Activated B cell treated with CpG ODN at 0.5 μM for 24 hours (primary cell): ENCODE measurements at regions of chr5 and their contacts with region 1.

Region 1: DNA sequence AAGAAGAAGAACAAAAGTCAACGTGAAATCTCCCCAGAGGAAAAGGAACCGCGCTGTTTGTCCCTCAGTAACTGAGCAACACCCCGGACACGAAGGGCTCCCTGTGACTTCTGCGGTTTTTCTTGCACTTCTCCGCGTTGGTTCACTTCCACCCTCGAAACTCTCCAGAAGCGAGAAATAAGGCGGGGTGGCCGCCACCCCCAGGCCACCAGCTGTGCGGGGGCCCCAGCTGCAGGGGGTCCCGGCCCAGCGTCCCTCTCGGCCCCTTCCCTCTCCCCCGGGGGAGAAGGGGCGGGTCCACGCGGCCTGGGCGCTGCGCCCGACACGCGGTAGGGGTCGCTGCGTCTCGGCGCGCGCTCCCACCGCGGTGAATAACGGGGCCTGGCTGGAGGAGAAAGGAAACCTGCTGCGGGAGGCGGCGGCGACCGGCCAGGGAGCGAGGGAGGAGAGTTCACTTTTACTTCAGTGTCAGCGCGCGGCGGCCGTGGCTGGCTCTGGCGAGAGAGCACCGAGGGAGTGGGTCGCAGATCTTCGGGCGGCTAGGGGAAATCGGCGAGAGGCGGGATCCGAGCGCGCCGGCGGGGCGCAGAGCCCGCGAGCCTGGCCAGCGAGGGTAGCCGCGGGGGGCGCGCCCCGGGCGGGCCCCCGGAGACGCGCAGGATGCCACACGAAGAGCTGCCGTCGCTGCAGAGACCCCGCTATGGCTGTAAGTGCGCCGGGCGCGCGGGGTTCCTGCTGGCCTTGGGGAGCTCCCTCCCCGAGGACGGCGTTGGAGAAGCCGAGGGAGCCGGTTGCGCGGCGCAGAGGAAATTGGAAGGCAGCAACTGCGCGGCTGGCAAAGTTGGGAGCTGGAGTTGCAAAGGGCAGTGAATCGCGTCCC is at the start of gene IQGAP2:
- DNase-seq: peak; percentile 82
- ATAC-seq: peak; percentile 75
- H3K4me3 Mint-ChIP-seq: peak within 1 kb of the TSS; percentile 95
- H3K27ac Mint-ChIP-seq: peak within 1 kb of the TSS; percentile 97
- H3K4me1 Mint-ChIP-seq: peaks cover 51% of the 10 kb centered on the region
- H3K27me3 Mint-ChIP-seq: peaks cover 3% of the 10 kb centered on the region
- CTCF ChIP-seq: no peak
- total RNA-seq, gene IQGAP2: 6.7 and 8.8 TPM in 2 replicates

Region 2: GRCh38 chr5:74684900-74685851 is 1718.0 kb before region 1 on chr5 and contains the start of gene HEXB:
- CTCF ChIA-PET with region 1: no interaction called
- POLR2A ChIA-PET with region 1: no interaction called
- intact Hi-C with region 1: loop called (anchors 10 kb)
- DNase-seq: peak; percentile 77
- ATAC-seq: peak; percentile 86
- H3K4me3 Mint-ChIP-seq: peak within 1 kb of the TSS; percentile 81
- H3K27ac Mint-ChIP-seq: peak within 1 kb of the TSS; percentile 63
- H3K4me1 Mint-ChIP-seq: peaks cover 18% of the 10 kb centered on the region
- H3K27me3 Mint-ChIP-seq: no peaks in the 10 kb centered on the region
- CTCF ChIP-seq: no peak
- total RNA-seq, gene HEXB: 34.5 and 43.2 TPM in 2 replicates

Region 3: GRCh38 chr5:75511435-75512384 is 891.4 kb before region 1 on chr5 and contains the starts of genes CERT1 and POLK:
- CTCF ChIA-PET with region 1: no interaction called
- POLR2A ChIA-PET with region 1: no interaction called
- intact Hi-C with region 1: loop called (anchors 5 kb)
- DNase-seq: peak; percentile 85
- ATAC-seq: peak; percentile 90
- H3K4me3 Mint-ChIP-seq: peak within 1 kb of the TSS; percentile 95
- H3K27ac Mint-ChIP-seq: peak within 1 kb of the TSS; percentile 95
- H3K4me1 Mint-ChIP-seq: peaks cover 70% of the 10 kb centered on the region
- H3K27me3 Mint-ChIP-seq: no peaks in the 10 kb centered on the region
- CTCF ChIP-seq: no peak
- total RNA-seq, gene CERT1: 39.1 and 49.5 TPM in 2 replicates
- total RNA-seq, gene POLK: 29.0 and 34.0 TPM in 2 replicates

Region 4: GRCh38 chr5:76145945-76146344 is 257.2 kb before region 1 on chr5:
- CTCF ChIA-PET with region 1: no interaction called
- POLR2A ChIA-PET with region 1: no interaction called
- intact Hi-C with region 1: no loop called
- DNase-seq: no peak
- ATAC-seq: no peak
- H3K4me3 Mint-ChIP-seq: no peak overlapping the region
- H3K27ac Mint-ChIP-seq: no peak overlapping the region
- H3K4me1 Mint-ChIP-seq: no peaks in the 10 kb centered on the region
- H3K27me3 Mint-ChIP-seq: peaks cover 9% of the 10 kb centered on the region
- CTCF ChIP-seq: no peak

Region 5: DNA sequence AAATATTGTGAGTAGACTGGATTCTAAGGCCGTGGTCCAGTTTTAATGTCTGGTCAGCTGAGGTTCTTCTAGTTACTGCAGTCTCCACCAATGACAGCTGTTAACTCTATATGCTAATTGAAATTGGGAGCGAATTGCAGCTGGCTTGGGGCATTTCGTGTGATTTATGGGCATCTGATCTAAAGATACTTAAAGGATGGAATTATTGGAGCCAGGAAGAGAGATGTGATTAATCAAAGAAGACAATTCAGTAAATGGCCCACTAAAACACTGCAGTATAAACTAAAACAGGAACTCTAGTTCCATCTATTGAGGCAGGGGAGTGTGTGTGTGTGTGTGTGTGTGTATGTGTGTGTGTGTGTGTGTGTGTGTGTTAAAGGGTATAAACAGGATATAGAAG is 157.5 kb before region 1 on chr5:
- CTCF ChIA-PET with region 1: no interaction called
- POLR2A ChIA-PET with region 1: no interaction called
- intact Hi-C with region 1: no loop called
- DNase-seq: no peak
- ATAC-seq: no peak
- H3K4me3 Mint-ChIP-seq: no peak overlapping the region
- H3K27ac Mint-ChIP-seq: no peak overlapping the region
- H3K4me1 Mint-ChIP-seq: no peaks in the 10 kb centered on the region
- H3K27me3 Mint-ChIP-seq: no peaks in the 10 kb centered on the region
- CTCF ChIP-seq: no peak

Region 6: DNA sequence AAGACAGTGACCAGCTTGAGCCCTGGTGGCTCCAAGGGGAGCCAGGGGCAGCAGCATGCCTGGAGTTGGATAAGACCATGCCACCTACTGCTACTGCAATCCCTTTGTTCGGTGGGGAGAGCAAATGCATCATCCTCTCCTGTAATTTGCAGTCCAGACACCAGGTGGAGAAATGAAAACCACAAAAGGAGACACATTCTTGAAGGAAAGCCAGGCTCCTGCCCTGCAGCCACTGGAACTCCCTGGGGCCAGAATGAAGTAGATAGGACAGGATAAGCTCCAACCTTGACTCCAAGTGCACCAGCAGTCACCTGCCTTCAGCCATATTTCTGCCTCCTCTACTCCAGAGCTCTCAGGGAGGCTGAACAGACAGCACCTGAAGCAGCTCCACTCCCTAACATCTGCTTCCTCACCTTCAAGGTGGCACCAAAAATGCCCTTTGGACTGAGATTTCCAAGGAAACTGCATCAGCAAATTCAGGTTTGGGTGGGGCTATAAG is 65.1 kb before region 1 on chr5:
- CTCF ChIA-PET with region 1: no interaction called
- POLR2A ChIA-PET with region 1: interaction called, 6 read pairs
- intact Hi-C with region 1: loop called (anchors 2 kb)
- DNase-seq: no peak
- ATAC-seq: peak; percentile 42
- H3K4me3 Mint-ChIP-seq: no peak overlapping the region
- H3K27ac Mint-ChIP-seq: no peak overlapping the region
- H3K4me1 Mint-ChIP-seq: peaks cover 4% of the 10 kb centered on the region
- H3K27me3 Mint-ChIP-seq: no peaks in the 10 kb centered on the region
- CTCF ChIP-seq: no peak

Region 7: DNA sequence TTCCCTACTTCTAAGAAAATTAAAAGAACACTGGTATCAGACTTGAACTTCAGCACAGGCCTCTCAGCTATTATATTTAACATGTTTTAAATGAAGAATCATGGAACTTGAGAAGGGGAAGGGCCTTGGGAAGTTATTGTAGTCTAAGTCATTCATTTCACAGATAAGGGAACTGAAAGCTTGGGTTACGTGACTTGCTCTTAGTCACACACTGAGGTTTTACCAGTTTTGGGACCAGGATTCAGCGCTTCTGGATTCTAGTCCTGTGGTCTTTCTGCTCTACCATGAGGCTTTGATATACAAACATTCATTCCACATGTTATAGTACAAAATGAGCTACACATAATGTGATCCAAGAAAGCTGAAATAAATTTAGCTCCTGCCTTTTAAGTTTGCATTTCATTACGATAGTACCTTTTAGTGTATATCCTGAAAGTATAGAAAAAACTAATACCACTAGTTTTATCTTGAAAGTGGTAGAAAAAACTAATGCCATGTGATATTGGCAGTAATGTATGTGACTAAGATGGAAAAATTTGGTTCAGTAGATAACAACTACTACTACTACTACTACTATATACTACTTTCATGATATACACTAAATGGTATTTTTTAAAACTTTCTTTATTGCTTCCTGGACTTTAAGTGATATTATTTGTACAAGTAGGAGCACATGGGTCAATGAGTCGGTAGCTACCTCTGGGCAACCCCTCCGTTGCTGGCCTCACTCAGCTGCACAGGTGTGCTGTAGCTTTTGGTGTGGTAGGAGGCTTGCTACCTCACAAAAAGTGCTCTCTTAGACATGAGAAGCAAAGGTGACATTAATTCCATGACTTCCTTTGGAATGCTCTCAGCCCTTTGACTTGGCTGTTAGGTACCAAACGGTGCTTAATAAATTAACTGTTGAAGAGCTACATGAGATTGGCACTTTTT is 179.4 kb after region 1 on chr5:
- CTCF ChIA-PET with region 1: interaction called, 6 read pairs
- POLR2A ChIA-PET with region 1: interaction called, 6 read pairs
- intact Hi-C with region 1: loop called (anchors 1 kb)
- DNase-seq: no peak
- ATAC-seq: peak; percentile 74
- H3K4me3 Mint-ChIP-seq: no peak overlapping the region
- H3K27ac Mint-ChIP-seq: no peak overlapping the region
- H3K4me1 Mint-ChIP-seq: peaks cover 17% of the 10 kb centered on the region
- H3K27me3 Mint-ChIP-seq: no peaks in the 10 kb centered on the region
- CTCF ChIP-seq: no peak

Region 8: GRCh38 chr5:76715736-76716455 is 312.8 kb after region 1 on chr5 and contains the start of gene F2R:
- CTCF ChIA-PET with region 1: no interaction called
- POLR2A ChIA-PET with region 1: no interaction called
- intact Hi-C with region 1: loop called (anchors 5 kb)
- DNase-seq: peak; percentile 23
- ATAC-seq: peak; percentile 77
- H3K4me3 Mint-ChIP-seq: peak within 1 kb of the TSS; percentile 80
- H3K27ac Mint-ChIP-seq: no peak within 1 kb of the TSS
- H3K4me1 Mint-ChIP-seq: peaks cover 25% of the 10 kb centered on the region
- H3K27me3 Mint-ChIP-seq: peaks cover 42% of the 10 kb centered on the region
- CTCF ChIP-seq: no peak
- total RNA-seq, gene F2R: 0.18 and 0.20 TPM in 2 replicates

Region 9: DNA sequence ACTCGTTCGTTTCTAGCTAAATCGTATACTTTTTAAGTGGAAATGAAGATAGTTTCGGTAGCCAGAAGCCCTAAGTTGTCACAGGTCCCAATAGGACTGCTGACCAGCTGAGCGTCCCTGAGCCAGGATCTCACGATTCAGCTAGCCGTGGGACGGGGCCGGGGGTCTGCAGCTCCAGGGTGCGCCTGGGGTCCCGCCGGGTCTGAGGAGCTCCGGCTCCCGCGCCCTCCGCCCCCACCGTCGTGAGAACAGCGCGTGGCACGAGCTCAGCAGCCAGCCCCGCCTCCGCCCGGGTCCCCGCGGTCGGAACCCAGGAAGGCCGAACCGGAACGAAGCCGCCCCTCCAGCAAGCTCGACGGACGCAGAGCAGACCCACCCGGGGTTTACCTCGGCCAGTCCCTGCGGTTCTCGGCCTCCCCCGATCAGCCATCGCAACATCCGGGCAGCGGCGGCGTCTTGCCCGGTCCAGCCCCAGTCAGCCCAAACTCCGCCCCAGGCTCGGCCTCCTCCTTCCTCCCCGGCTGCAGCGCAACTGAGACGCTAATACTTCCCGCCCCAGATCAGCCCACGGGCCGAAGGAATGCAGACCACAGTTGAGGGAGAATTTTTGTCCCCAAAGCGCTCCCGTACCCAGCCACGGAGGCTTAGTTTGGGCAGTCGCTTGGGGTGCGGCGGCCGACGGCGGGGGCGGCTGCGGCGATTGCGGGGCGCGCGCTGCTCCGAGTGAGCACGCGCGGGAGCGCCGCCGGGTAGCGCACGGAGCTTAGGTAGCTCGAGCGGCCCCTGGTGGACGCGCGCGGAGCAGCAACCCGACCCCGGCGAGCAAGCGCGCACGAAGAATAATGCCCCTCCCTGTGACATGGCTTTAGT is 1088.9 kb after region 1 on chr5 and contains the start of gene WDR41:
- CTCF ChIA-PET with region 1: no interaction called
- POLR2A ChIA-PET with region 1: no interaction called
- intact Hi-C with region 1: loop called (anchors 10 kb)
- DNase-seq: peak; percentile 87
- ATAC-seq: peak; percentile 82
- H3K4me3 Mint-ChIP-seq: peak within 1 kb of the TSS; percentile 91
- H3K27ac Mint-ChIP-seq: peak within 1 kb of the TSS; percentile 93
- H3K4me1 Mint-ChIP-seq: peaks cover 22% of the 10 kb centered on the region
- H3K27me3 Mint-ChIP-seq: peaks cover 7% of the 10 kb centered on the region
- CTCF ChIP-seq: no peak
- total RNA-seq, gene WDR41: 29.2 and 33.0 TPM in 2 replicates